Activated CD4-positive, alpha-beta T cell treated with anti-CD3 and anti-CD28 coated beads, Interleukin-2, amount 10 ng/mL, durations not matched to agents 7 days and 5 days (primary cell): ENCODE measurements at regions of chr19 and their contacts with region 1.

Region 1: DNA sequence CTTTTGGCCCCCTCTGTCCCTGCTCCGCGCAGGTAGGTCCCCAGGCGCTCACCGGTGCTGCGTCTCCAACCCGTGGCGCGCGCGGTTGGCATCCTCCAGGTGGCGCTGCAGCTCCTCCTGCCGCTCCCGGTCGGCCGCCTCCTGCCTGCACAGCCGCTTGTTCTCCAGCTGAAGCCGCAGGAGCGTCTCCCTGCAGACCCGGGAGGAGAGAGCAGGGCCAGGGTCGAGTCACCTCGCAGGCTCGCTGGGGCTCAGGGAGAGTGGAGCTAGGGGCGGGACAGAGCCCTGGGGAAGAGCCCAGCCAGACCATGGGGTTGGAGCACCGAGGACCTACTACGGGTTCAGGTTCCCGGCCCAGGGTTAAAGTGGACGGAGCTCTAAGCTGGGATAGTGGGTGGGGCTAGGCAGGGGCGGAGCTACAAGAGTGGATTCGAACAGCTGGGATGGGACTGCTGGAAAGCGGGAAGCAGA is 9.3 kb downstream of the HOOK2 start:
- DNase-seq: peak; percentile 86
- H3K4me3 Mint-ChIP-seq: no peak overlapping the region
- H3K27ac Mint-ChIP-seq: no peak overlapping the region
- H3K4me1 Mint-ChIP-seq: peaks cover 13% of the 10 kb centered on the region
- H3K27me3 Mint-ChIP-seq: no peaks in the 10 kb centered on the region

Region 2: GRCh38 chr19:12679471-12679870 is 86.6 kb before region 1 on chr19:
- CTCF ChIA-PET with region 1: no interaction called
- POLR2A ChIA-PET with region 1: no interaction called
- DNase-seq: no peak
- H3K4me3 Mint-ChIP-seq: peak overlapping the region; percentile 93
- H3K27ac Mint-ChIP-seq: peak overlapping the region; percentile 54
- H3K4me1 Mint-ChIP-seq: peaks cover 27% of the 10 kb centered on the region
- H3K27me3 Mint-ChIP-seq: no peaks in the 10 kb centered on the region

Region 3: GRCh38 chr19:12777217-12778016 is 11.3 kb after region 1 on chr19:
- CTCF ChIA-PET with region 1: interaction called, 33 read pairs
- POLR2A ChIA-PET with region 1: no interaction called
- DNase-seq: peak; percentile 77
- H3K4me3 Mint-ChIP-seq: peak overlapping the region; percentile 79
- H3K27ac Mint-ChIP-seq: peak overlapping the region; percentile 89
- H3K4me1 Mint-ChIP-seq: peaks cover 50% of the 10 kb centered on the region
- H3K27me3 Mint-ChIP-seq: no peaks in the 10 kb centered on the region

Region 4: GRCh38 chr19:12782229-12783028 is 16.3 kb after region 1 on chr19:
- CTCF ChIA-PET with region 1: interaction called, 33 read pairs
- POLR2A ChIA-PET with region 1: no interaction called
- DNase-seq: peak; percentile 87
- H3K4me3 Mint-ChIP-seq: peak overlapping the region; percentile 93
- H3K27ac Mint-ChIP-seq: peak overlapping the region; percentile 99
- H3K4me1 Mint-ChIP-seq: peaks cover 48% of the 10 kb centered on the region
- H3K27me3 Mint-ChIP-seq: no peaks in the 10 kb centered on the region